Activated CD4-positive, alpha-beta T cell treated with anti-CD3 and anti-CD28 coated beads, Interleukin-2, amount 10 ng/mL, durations not matched to agents 24 days and 14 days (primary cell): ENCODE measurements at regions of chr1 and their contacts with region 1.

Region 1: GRCh38 chr1:221708987-221709386 is 32.9 kb downstream of the DUSP10 start:
- DNase-seq: peak; percentile 85
- H3K4me3 Mint-ChIP-seq: peak overlapping the region; percentile 28
- H3K27ac Mint-ChIP-seq: peak overlapping the region; percentile 90
- H3K4me1 Mint-ChIP-seq: peaks cover 63% of the 10 kb centered on the region
- H3K27me3 Mint-ChIP-seq: no peaks in the 10 kb centered on the region

Region 2: DNA sequence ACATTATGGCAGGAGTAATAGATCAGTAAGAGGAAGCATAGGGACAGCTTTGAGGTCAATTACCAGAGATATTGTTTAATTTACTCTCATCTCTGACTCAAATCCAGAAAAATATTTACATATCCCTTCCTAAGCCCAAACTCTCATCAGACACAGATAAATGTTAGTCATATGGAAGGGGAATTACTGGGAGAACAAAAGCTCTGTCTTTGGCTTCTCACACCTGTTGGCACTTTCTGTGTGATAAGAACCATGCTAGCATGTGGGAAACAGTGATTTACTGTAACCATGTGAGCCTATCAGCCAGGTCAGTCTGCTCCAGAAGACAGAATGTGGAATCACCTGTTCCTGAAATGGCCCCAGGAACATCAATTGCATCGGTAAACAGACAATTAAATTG is 39.5 kb before region 1 on chr1:
- intact Hi-C with region 1: loop called (anchors 2 kb)
- DNase-seq: no peak
- H3K4me3 Mint-ChIP-seq: no peak overlapping the region
- H3K27ac Mint-ChIP-seq: no peak overlapping the region
- H3K4me1 Mint-ChIP-seq: peaks cover 4% of the 10 kb centered on the region
- H3K27me3 Mint-ChIP-seq: peaks cover 19% of the 10 kb centered on the region

Region 3: GRCh38 chr1:221753828-221754188 is 44.8 kb after region 1 on chr1:
- intact Hi-C with region 1: loop called (anchors 1 kb)
- DNase-seq: no peak
- H3K4me3 Mint-ChIP-seq: peak overlapping the region; percentile 38
- H3K27ac Mint-ChIP-seq: peak overlapping the region; percentile 86
- H3K4me1 Mint-ChIP-seq: peaks cover 55% of the 10 kb centered on the region
- H3K27me3 Mint-ChIP-seq: no peaks in the 10 kb centered on the region

Region 4: GRCh38 chr1:221829327-221830015 is 120.5 kb after region 1 on chr1:
- intact Hi-C with region 1: loop called (anchors 1 kb)
- DNase-seq: peak; percentile 84
- H3K4me3 Mint-ChIP-seq: peak overlapping the region; percentile 73
- H3K27ac Mint-ChIP-seq: peak overlapping the region; percentile 90
- H3K4me1 Mint-ChIP-seq: peaks cover 67% of the 10 kb centered on the region
- H3K27me3 Mint-ChIP-seq: no peaks in the 10 kb centered on the region

Region 5: DNA sequence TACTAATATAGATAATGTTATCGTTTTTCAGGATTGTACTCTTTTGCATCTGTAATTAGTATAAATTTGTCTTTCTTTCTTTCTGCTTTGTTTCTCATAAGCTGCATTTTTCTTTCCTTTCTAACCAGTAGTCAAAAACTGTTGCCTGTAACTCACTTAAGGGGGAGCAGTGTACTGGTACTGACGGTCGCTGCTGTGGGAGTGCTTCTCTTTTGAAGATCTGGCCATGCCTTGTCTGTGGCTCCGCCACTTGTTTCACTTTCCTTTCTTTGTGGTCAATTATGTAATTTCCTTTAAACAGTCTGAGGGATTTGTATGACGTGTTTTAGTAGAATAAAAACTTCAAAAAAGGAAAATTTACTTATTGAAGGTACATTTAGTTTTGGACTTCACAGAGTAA is 945.9 kb after region 1 on chr1:
- intact Hi-C with region 1: loop called (anchors 10 kb)
- DNase-seq: peak; percentile 92
- H3K4me3 Mint-ChIP-seq: peak overlapping the region; percentile 69
- H3K27ac Mint-ChIP-seq: peak overlapping the region; percentile 86
- H3K4me1 Mint-ChIP-seq: peaks cover 51% of the 10 kb centered on the region
- H3K27me3 Mint-ChIP-seq: no peaks in the 10 kb centered on the region